MCF 10A (cell line): ENCODE measurements at regions of chr2 and their contacts with region 1.

Region 1: GRCh38 chr2:144553379-144553778 is 33.5 kb upstream of the ZEB2 start:
- DNase-seq: peak; percentile 92
- H3K4me3 Mint-ChIP-seq: no peak overlapping the region
- H3K27ac Mint-ChIP-seq: peak overlapping the region; percentile 99
- H3K4me1 Mint-ChIP-seq: peaks cover 39% of the 10 kb centered on the region
- H3K27me3 Mint-ChIP-seq: no peaks in the 10 kb centered on the region
- CTCF ChIP-seq: no peak

Region 2: GRCh38 chr2:144529841-144530240 is 23.5 kb before region 1 on chr2:
- CTCF ChIA-PET with region 1: interaction called, 4 read pairs
- POLR2A ChIA-PET with region 1: interaction called, 12 read pairs
- intact Hi-C with region 1: no loop called
- DNase-seq: peak; percentile 55
- H3K4me3 Mint-ChIP-seq: no peak overlapping the region
- H3K27ac Mint-ChIP-seq: peak overlapping the region; percentile 46
- H3K4me1 Mint-ChIP-seq: peaks cover 13% of the 10 kb centered on the region
- H3K27me3 Mint-ChIP-seq: no peaks in the 10 kb centered on the region
- CTCF ChIP-seq: no peak

Region 3: GRCh38 chr2:144596073-144596871 is 42.9 kb after region 1 on chr2:
- CTCF ChIA-PET with region 1: no interaction called
- POLR2A ChIA-PET with region 1: no interaction called
- intact Hi-C with region 1: no loop called
- DNase-seq: peak; percentile 56
- H3K4me3 Mint-ChIP-seq: no peak overlapping the region
- H3K27ac Mint-ChIP-seq: peak overlapping the region; percentile 46
- H3K4me1 Mint-ChIP-seq: peaks cover 15% of the 10 kb centered on the region
- H3K27me3 Mint-ChIP-seq: no peaks in the 10 kb centered on the region
- CTCF ChIP-seq: no peak

Region 4: GRCh38 chr2:144629932-144630331 is 76.6 kb after region 1 on chr2:
- CTCF ChIA-PET with region 1: interaction called, 3 read pairs
- POLR2A ChIA-PET with region 1: interaction called, 23 read pairs
- intact Hi-C with region 1: no loop called
- DNase-seq: no peak
- H3K4me3 Mint-ChIP-seq: no peak overlapping the region
- H3K27ac Mint-ChIP-seq: no peak overlapping the region
- H3K4me1 Mint-ChIP-seq: peaks cover 21% of the 10 kb centered on the region
- H3K27me3 Mint-ChIP-seq: no peaks in the 10 kb centered on the region
- CTCF ChIP-seq: no peak